MCF 10A (cell line): ENCODE measurements at regions of chr1 and their contacts with region 1.

Region 1: DNA sequence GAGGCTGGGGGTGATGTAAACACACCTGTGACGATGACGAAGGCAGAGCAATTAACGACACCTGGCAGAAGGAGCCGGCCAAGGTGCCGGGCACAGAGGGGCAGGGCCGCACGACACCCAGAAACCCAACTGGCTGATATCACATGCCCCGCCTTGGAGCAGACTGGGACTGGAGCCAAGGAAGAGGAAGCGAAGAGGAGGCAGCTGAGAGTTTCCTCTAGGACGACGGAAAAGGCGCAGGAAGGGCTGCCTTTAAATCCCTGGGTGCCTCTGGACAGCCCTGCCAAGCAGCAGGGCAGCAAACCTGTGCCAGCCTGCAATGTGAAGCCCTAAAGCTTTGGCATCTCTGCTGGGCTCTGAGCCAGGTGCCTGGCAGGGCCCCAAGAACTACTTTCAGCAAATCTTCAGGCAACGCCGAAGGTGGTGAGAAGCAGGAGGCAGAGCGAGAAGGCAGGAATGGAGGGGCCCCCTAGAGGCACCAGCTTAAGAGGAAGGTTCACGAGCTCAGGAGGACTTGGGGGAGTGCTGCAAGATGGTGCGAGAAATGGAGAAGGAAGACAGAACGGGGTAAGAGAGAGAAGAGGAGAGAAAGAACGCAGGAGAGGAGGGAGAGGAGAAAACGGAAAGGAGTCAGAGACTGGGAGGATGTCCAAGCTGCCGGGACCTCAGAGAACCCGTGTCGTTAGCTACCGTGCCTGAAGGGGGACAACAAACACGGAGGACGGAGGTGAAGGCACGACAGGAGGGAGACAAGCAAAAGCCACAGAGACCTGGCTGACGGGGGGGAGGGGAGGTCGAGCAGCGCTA is 25.3 kb upstream of the PEF1 start:
- DNase-seq: peak; percentile 97
- H3K4me3 Mint-ChIP-seq: peak overlapping the region; percentile 73
- H3K27ac Mint-ChIP-seq: peak overlapping the region; percentile 62
- H3K4me1 Mint-ChIP-seq: peaks cover 45% of the 10 kb centered on the region
- H3K27me3 Mint-ChIP-seq: no peaks in the 10 kb centered on the region
- CTCF ChIP-seq: no peak

Region 2: GRCh38 chr1:31535561-31535960 is 134.4 kb before region 1 on chr1:
- CTCF ChIA-PET with region 1: no interaction called
- POLR2A ChIA-PET with region 1: no interaction called
- intact Hi-C with region 1: no loop called
- DNase-seq: peak; percentile 14
- H3K4me3 Mint-ChIP-seq: no peak overlapping the region
- H3K27ac Mint-ChIP-seq: no peak overlapping the region
- H3K4me1 Mint-ChIP-seq: peaks cover 10% of the 10 kb centered on the region
- H3K27me3 Mint-ChIP-seq: no peaks in the 10 kb centered on the region
- CTCF ChIP-seq: no peak

Region 3: GRCh38 chr1:31639543-31639942 is 30.4 kb before region 1 on chr1:
- CTCF ChIA-PET with region 1: no interaction called
- POLR2A ChIA-PET with region 1: interaction called, 38 read pairs
- intact Hi-C with region 1: no loop called
- DNase-seq: peak; percentile 70
- H3K4me3 Mint-ChIP-seq: no peak overlapping the region
- H3K27ac Mint-ChIP-seq: no peak overlapping the region
- H3K4me1 Mint-ChIP-seq: peaks cover 19% of the 10 kb centered on the region
- H3K27me3 Mint-ChIP-seq: no peaks in the 10 kb centered on the region
- CTCF ChIP-seq: no peak

Region 4: GRCh38 chr1:31689821-31690220 is 19.8 kb after region 1 on chr1:
- CTCF ChIA-PET with region 1: interaction called, 4 read pairs
- POLR2A ChIA-PET with region 1: interaction called, 4 read pairs
- intact Hi-C with region 1: loop called (anchors 1 kb)
- DNase-seq: peak; percentile 95
- H3K4me3 Mint-ChIP-seq: no peak overlapping the region
- H3K27ac Mint-ChIP-seq: peak overlapping the region; percentile 39
- H3K4me1 Mint-ChIP-seq: peaks cover 18% of the 10 kb centered on the region
- H3K27me3 Mint-ChIP-seq: no peaks in the 10 kb centered on the region
- CTCF ChIP-seq: no peak

Region 5: GRCh38 chr1:31715087-31715872 is 45.3 kb after region 1 on chr1:
- CTCF ChIA-PET with region 1: interaction called, 10 read pairs
- POLR2A ChIA-PET with region 1: interaction called, 11 read pairs
- intact Hi-C with region 1: no loop called
- DNase-seq: peak; percentile 61
- H3K4me3 Mint-ChIP-seq: no peak overlapping the region
- H3K27ac Mint-ChIP-seq: no peak overlapping the region
- H3K4me1 Mint-ChIP-seq: peaks cover 32% of the 10 kb centered on the region
- H3K27me3 Mint-ChIP-seq: peaks cover 13% of the 10 kb centered on the region
- CTCF ChIP-seq: peak; percentile 55